ENCODE measurements at regions of chr16 and their contacts with region 1.

Region 1: GRCh38 chr16:89490387-89491237 is at the start of gene ANKRD11:
- DNase-seq: peak; percentile 99
- H3K4me3 Mint-ChIP-seq: peak within 1 kb of the TSS; percentile 96
- H3K27ac Mint-ChIP-seq: peak within 1 kb of the TSS; percentile 99
- H3K4me1 Mint-ChIP-seq: peaks cover 52% of the 10 kb centered on the region
- H3K27me3 Mint-ChIP-seq: no peaks in the 10 kb centered on the region
- total RNA-seq, gene ANKRD11: 176 and 179 TPM in 2 replicates

Region 2: GRCh38 chr16:89331371-89332109 is 159.1 kb before region 1 on chr16:
- intact Hi-C with region 1: loop called (anchors 1 kb)
- DNase-seq: no peak
- H3K4me3 Mint-ChIP-seq: peak overlapping the region; percentile 31
- H3K27ac Mint-ChIP-seq: peak overlapping the region; percentile 2
- H3K4me1 Mint-ChIP-seq: peaks cover 71% of the 10 kb centered on the region
- H3K27me3 Mint-ChIP-seq: no peaks in the 10 kb centered on the region

Region 3: DNA sequence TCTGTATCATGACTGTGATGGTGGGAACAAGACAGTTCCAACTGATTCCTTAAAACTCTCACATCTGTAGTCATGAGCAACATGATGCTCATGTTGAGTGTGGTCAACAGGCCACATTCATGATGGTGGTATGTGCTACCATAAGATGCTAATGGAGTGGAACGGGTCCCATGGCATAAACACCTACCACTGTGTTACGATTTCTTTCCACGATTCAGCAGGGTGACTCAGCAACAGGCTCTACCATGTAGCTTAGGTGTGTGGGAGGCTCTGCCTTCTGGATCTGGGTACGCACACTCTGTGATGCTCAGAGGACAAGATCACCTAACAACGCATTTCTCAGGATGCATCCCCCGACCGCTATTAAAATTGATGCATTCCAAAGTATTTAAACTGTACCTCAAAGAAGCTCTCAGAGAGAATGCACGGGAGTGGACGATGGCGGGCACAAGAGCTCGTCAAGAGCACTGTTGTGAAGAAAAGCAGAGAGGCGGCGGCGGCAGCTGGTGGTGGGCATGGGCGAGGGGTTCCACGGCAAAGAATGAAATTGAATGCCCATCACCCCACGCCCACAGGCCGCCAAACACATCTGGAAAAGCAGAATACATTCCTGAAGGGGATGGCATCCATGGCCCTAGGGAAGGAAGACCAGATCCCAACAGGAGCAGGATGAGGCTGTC is 139.8 kb before region 1 on chr16:
- intact Hi-C with region 1: loop called (anchors 1 kb)
- DNase-seq: no peak
- H3K4me3 Mint-ChIP-seq: peak overlapping the region; percentile 25
- H3K27ac Mint-ChIP-seq: peak overlapping the region; percentile 85
- H3K4me1 Mint-ChIP-seq: peaks cover 68% of the 10 kb centered on the region
- H3K27me3 Mint-ChIP-seq: no peaks in the 10 kb centered on the region

Region 4: GRCh38 chr16:89453501-89454321 is 36.9 kb before region 1 on chr16:
- intact Hi-C with region 1: loop called (anchors 2 kb)
- DNase-seq: no peak
- H3K4me3 Mint-ChIP-seq: peak overlapping the region; percentile 40
- H3K27ac Mint-ChIP-seq: peak overlapping the region; percentile 75
- H3K4me1 Mint-ChIP-seq: peaks cover 54% of the 10 kb centered on the region
- H3K27me3 Mint-ChIP-seq: no peaks in the 10 kb centered on the region

Region 5: GRCh38 chr16:89511374-89511773 is 20.8 kb after region 1 on chr16:
- intact Hi-C with region 1: no loop called
- DNase-seq: no peak
- H3K4me3 Mint-ChIP-seq: no peak overlapping the region
- H3K27ac Mint-ChIP-seq: no peak overlapping the region
- H3K4me1 Mint-ChIP-seq: peaks cover 6% of the 10 kb centered on the region
- H3K27me3 Mint-ChIP-seq: no peaks in the 10 kb centered on the region

Region 6: DNA sequence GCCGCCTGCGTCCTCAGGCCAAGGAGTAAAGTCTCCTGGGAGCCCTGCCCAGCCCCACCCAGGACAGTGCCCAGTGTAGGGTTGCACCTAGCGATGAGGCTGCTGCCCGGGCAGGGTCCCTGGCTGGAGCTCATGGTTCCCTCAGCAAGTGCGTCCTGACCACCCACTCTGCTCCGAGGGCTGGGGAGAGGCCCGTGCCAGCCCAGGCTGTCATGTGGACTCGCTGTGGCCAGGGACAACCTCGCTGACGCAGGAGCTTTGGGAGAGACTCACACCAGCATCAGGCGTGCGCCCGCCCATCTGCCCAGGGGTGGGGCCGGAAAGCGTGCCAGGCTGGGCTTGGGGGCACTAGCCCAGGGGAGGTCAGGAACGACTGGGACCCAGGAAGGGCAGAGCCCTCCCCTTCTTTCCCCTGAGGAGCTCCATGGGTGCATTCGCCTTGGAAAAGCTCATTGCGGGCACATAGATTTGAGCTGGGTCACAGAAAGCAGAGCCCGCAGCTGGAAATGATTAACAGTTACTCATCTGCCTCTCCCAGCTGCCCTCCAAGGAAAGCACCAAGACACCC is 142.5 kb after region 1 on chr16:
- intact Hi-C with region 1: no loop called
- DNase-seq: no peak
- H3K4me3 Mint-ChIP-seq: no peak overlapping the region
- H3K27ac Mint-ChIP-seq: no peak overlapping the region
- H3K4me1 Mint-ChIP-seq: no peaks in the 10 kb centered on the region
- H3K27me3 Mint-ChIP-seq: no peaks in the 10 kb centered on the region